RWPE1 (cell line): ENCODE measurements at regions of chr3 and their contacts with region 1.

Region 1: GRCh38 chr3:108914774-108915641 is 38.7 kb downstream of the GUCA1C start:
- DNase-seq: peak; percentile 64
- H3K27ac ChIP-seq: no peak overlapping the region
- CTCF ChIP-seq: peak; percentile 78

Region 2: GRCh38 chr3:108662130-108662738 is 252.8 kb before region 1 on chr3:
- CTCF ChIA-PET with region 1: interaction called, 15 read pairs
- POLR2A ChIA-PET with region 1: no interaction called
- DNase-seq: peak; percentile 45
- H3K27ac ChIP-seq: no peak overlapping the region
- CTCF ChIP-seq: peak; percentile 75